ENCODE measurements at regions of chr22 and their contacts with region 1.

Region 1: DNA sequence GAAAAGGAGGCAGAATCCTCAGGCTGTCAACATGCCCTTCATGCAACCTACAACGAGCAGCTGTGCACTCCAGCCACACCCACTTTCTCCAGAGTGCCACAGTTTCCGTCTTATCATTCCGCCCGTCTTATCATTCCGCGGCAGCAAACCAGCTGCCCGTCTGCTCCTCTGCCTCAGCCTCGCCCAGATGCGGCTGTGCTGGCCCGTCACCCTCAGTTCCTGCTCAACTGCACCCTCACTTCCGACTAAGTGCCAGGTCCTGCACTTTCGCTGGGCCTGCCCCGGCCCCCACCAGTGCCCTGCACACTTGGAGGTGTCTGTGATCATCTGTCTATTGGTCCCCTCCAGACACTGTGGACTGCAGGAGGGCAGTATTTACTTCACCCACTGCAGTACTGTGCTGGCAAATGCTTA is 43.7 kb downstream of the MICAL3 start:
- DNase-seq: no peak
- ATAC-seq: no peak
- H3K4me3 ChIP-seq: no peak overlapping the region
- H3K27ac ChIP-seq: no peak overlapping the region
- H3K4me1 ChIP-seq: peaks cover 9% of the 10 kb centered on the region
- H3K27me3 ChIP-seq: no peaks in the 10 kb centered on the region
- CTCF ChIP-seq: no peak

Region 2: GRCh38 chr22:17910561-17911311 is 69.9 kb before region 1 on chr22:
- CTCF ChIA-PET with region 1: no interaction called
- POLR2A ChIA-PET with region 1: no interaction called
- intact Hi-C with region 1: loop called (anchors 10 kb)
- DNase-seq: peak; percentile 35
- ATAC-seq: peak; percentile 89
- H3K4me3 ChIP-seq: no peak overlapping the region
- H3K27ac ChIP-seq: 0 out of 2 replicates have a peak overlapping the region, but pooled peaks have one; percentile 8
- H3K4me1 ChIP-seq: peaks cover 12% of the 10 kb centered on the region; the same call in 1 of the 2 replicates
- H3K27me3 ChIP-seq: no peaks in the 10 kb centered on the region
- CTCF ChIP-seq: peak; percentile 25; the same call in 1 of the 2 replicates

Region 3: DNA sequence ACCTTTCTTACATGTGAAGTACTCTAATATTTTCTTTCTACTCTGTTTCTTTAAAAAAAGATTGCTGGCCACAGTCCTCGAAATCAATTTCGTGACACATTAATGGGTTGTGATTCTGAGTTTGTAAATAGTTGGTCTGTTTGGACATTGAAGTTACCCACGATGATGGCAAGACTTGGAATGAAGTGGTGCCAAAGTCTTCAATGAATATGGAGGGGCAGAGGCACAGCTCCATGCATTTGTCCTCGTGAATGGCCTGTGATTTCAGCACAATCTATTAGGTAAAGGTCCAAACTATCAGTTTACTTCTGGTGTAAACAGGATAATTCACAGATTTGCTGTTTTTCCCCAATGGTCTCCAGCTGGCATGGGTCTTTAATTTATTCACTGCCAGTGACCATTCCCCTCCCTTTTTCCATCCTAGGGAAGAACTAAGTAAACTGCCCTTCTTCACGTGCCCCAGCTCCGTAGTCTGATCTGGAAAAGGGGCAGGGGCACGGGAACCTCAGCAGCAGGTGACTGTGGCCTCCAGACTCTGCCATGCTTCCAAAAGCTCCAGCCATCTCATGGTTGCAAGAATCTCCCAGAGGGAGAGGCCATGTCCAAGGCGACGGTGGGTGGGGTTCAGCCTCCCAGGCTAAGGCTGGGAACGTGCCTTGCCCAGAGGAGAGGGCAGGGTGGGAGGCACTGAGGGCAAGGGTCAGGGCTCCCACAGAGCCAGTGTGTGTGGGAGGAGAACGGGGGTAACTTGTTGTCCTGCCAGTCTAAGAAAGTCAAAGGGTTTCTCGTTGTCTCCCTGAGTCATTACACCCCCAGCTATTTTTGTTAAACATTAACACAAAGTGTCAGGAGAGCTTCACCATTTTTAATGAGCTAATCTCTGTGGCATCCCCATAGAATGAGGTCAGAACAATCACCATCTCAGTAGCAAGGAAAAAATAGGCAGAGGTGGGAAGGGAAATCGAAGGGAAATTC is 80.3 kb after region 1 on chr22:
- CTCF ChIA-PET with region 1: no interaction called
- POLR2A ChIA-PET with region 1: no interaction called
- intact Hi-C with region 1: no loop called
- DNase-seq: peak; percentile 65
- ATAC-seq: no peak
- H3K4me3 ChIP-seq: no peak overlapping the region
- H3K27ac ChIP-seq: peak overlapping the region; percentile 53
- H3K4me1 ChIP-seq: peaks cover 65% of the 10 kb centered on the region
- H3K27me3 ChIP-seq: no peaks in the 10 kb centered on the region
- CTCF ChIP-seq: no peak

Measured in PC-3 (cell line).